ENCODE measurements at regions of chr17 and their contacts with region 1.

Region 1: DNA sequence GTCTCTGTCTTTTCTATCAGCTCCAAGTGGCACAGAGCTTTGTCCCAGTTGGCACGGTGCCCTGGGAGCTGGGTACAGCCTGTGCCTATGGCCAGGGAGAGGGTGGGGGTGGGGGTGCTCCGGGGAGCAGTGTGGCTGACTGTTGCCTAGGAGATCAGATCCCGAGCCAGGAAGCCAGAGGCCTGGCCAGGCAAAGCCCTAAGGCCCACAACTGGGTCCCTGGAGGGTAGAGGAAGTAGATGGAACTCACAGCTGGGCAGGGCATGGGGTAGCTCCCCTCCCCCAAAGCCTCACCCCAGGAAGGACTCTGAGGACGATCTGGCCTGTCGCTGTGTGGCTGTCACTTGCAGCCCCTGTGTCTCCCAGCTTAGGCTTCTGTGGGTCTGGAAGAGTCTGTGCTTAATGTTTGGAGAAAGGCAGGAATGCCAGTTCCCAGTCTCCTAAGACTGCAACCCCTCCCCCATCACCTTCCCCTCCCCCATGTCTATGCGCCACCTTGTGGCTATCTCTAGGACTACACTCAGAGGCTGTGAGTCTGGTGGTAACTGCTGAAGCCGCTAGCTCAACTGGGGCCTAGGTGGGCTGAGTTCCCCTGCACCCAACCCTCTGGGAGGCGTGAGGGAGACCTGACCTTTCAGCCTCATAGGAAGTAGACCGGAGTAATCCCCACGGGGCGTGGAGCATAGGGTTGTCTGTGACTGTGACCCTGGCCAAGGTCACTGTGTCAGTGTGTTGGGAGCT is 12.6 kb downstream of the THRA start:
- DNase-seq: peak; percentile 80 to 85
- ATAC-seq: peak; percentile 53 to 77 (median 70)
- H3K4me3 ChIP-seq: peak overlapping the region in 6 of 10 donors; percentile 1 to 28 (median 16)
- H3K27ac ChIP-seq: peak overlapping the region; percentile 74 to 99 (median 90)
- H3K4me1 ChIP-seq: peaks cover 44 to 75% (median 67%) of the 10 kb centered on the region in 9 donors
- H3K27me3 ChIP-seq: no peaks in the 10 kb centered on the region
- CTCF ChIP-seq: peak; percentile 70 to 89 (median 86)

Region 2: DNA sequence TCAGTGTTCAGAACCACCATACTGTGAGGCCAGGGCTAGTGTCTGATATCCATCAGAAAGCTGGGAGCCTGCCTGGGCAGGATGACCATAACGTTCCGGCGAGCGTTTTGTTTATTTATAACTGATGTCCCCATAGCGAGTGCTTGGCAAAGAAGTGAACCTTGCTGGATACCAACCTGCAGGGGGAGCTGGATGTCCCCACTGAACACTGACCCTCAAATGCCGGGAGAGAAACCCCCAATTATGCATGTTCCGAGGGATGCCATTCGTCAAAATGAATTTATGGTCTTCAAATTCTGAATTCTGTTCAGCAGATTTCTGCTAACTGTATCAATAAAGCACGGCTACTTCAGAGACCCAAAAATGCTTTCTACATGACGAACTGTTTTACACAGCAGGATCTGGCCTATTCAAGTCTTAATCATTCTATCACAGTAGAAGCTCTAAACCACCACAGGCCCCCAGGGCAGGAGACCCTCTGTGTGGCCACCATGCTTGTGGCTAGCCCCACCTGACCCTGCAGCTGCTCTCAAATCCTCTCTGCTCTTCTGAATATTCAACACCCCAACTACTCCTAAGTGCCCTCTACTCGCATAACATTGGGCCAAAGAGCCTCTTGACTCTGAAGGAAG is 36.4 kb before region 1 on chr17:
- intact Hi-C with region 1: loop called in 5 of 10 experiments (anchors 5 to 10 kb)
- DNase-seq: peak; percentile 54 to 87
- ATAC-seq: peak; percentile 88 to 98 (median 94)
- H3K4me3 ChIP-seq: peak overlapping the region in 1 of 10 donors; percentile 12
- H3K27ac ChIP-seq: peak overlapping the region; percentile 51 to 86 (median 78)
- H3K4me1 ChIP-seq: peaks cover 0 to 30% (median 17%) of the 10 kb centered on the region in 9 donors
- H3K27me3 ChIP-seq: no peaks in the 10 kb centered on the region
- CTCF ChIP-seq: peak; percentile 65 to 85 (median 73)

Region 3: GRCh38 chr17:40062329-40063186 is 12.8 kb before region 1 on chr17 and contains the start of gene THRA:
- intact Hi-C with region 1: loop called in 1 of 10 experiments (anchors 1 kb)
- DNase-seq: peak; percentile 76 to 83
- ATAC-seq: peak; percentile 54 to 92 (median 68)
- H3K4me3 ChIP-seq: peak within 1 kb of the TSS; percentile 85 to 100 (median 99)
- H3K27ac ChIP-seq: peak within 1 kb of the TSS; percentile 94 to 100 (median 98)
- H3K4me1 ChIP-seq: peaks cover 26 to 62% (median 56%) of the 10 kb centered on the region in 9 donors
- H3K27me3 ChIP-seq: no peaks in the 10 kb centered on the region
- CTCF ChIP-seq: peak in 5 of 9 donors; percentile 4 to 48 (median 20)
- total RNA-seq, gene THRA: 59.8 to 102 (median 69.7) TPM

Region 4: DNA sequence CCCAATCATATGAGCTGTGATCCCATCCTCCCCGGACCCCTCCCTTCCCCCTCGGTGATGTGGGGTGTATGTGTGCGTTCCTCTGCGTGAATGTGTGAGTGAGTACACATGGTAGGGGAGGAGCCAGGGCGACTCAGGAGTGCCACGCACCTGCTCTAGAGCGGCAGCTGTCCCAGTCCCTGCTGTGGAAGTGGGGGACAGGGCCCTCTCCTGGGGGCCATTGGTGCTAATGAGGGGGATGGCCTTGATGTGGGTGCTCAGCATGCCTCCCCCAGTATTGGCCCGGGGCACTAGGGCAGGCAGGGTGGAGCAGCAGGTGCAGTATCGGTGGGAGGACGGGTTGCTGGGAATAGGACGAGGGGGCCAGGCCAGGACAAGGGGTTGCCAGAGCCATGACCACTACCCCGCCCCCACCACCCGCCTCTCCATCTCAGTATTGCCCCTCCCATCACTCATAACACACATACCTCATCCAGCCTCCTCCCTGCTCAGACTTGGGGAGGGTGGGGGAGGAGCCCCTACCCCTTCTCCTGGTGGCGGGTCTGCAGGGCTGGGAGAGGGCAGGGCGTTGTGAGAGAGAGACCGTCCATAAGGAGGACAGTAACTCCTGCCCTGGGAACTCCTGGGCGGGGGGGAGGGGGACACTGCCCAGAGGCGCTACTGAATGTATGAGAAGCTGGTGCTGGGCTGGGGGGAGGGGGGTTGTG is 16.5 kb after region 1 on chr17:
- intact Hi-C with region 1: loop called in 1 of 10 experiments (anchors 2 kb)
- DNase-seq: peak in 1 of 2 donors; percentile 41
- ATAC-seq: peak in 6 of 8 donors; percentile 1 to 33 (median 14)
- H3K4me3 ChIP-seq: no peak overlapping the region
- H3K27ac ChIP-seq: peak overlapping the region; percentile 36 to 99 (median 95)
- H3K4me1 ChIP-seq: peaks cover 39 to 79% (median 69%) of the 10 kb centered on the region in 9 donors
- H3K27me3 ChIP-seq: no peaks in the 10 kb centered on the region
- CTCF ChIP-seq: no peak

Region 5: DNA sequence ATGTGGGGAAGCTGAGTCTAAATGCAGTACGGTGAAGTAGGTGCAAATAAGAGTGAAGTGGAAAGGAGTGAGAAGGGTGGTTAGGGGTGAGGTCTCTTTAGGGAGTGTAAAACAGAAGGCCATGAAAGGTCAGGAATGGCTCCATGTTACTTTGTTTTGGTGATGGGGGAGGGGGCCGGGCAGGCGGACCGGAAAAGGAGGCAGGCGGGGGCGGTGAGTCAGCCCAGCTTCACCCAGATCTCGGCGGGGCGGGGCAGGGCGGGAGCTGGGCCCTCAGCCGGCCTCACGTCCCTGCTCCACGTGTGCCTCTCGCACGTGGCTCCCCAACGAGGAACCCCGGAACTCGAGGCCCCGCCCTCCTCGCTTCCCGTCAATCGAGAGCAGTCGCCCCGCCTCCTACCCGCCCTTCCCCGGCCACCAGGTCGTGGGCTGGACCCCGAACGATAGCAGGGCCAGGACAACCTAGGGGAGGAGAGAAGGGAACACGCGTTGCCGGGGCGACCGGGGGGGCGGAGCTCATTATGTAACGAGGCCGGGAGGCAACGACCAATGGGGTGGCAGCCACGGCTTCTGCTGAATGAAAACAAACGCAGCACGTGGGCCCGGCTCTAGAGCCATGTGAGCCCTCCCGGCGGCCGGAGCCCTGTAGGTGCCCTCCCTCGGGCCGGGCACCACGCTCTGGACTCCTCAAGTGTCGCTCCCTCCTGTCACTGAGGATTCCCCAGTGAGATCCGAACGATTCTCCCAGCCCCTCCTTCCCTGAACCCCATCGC is 23.7 kb after region 1 on chr17:
- intact Hi-C with region 1: loop called in 1 of 10 experiments (anchors 2 kb)
- DNase-seq: peak; percentile 100
- ATAC-seq: peak; percentile 81 to 88 (median 84)
- H3K4me3 ChIP-seq: peak overlapping the region; percentile 59 to 100 (median 84)
- H3K27ac ChIP-seq: peak overlapping the region; percentile 81 to 99 (median 95)
- H3K4me1 ChIP-seq: peaks cover 52 to 90% (median 79%) of the 10 kb centered on the region in 9 donors
- H3K27me3 ChIP-seq: no peaks in the 10 kb centered on the region
- CTCF ChIP-seq: no peak

Region 6: GRCh38 chr17:40191237-40192208 is 116.2 kb after region 1 on chr17:
- intact Hi-C with region 1: no loop called
- DNase-seq: peak; percentile 65 to 76
- ATAC-seq: peak; percentile 77 to 91 (median 82)
- H3K4me3 ChIP-seq: peak overlapping the region; percentile 27 to 70 (median 62)
- H3K27ac ChIP-seq: peak overlapping the region in 7 of 10 donors; percentile 18 to 54 (median 40)
- H3K4me1 ChIP-seq: peaks cover 0 to 25% (median 7%) of the 10 kb centered on the region in 9 donors
- H3K27me3 ChIP-seq: peaks cover 0 to 7% (median 0%) of the 10 kb centered on the region in 7 donors
- CTCF ChIP-seq: peak; percentile 39 to 84 (median 70)